Breast epithelium (tissue), 4 donors: ENCODE measurements at regions of chr5 and their contacts with region 1.

Region 1: GRCh38 chr5:124927735-124928134 is 181.3 kb upstream of the ZNF608 start:
- DNase-seq: no peak
- H3K4me3 ChIP-seq: no peak overlapping the region
- H3K27ac ChIP-seq: no peak overlapping the region
- H3K4me1 ChIP-seq: no peaks in the 10 kb centered on the region
- H3K27me3 ChIP-seq: no peaks in the 10 kb centered on the region
- CTCF ChIP-seq: no peak
- POLR2A ChIP-seq: no peak

Region 2: DNA sequence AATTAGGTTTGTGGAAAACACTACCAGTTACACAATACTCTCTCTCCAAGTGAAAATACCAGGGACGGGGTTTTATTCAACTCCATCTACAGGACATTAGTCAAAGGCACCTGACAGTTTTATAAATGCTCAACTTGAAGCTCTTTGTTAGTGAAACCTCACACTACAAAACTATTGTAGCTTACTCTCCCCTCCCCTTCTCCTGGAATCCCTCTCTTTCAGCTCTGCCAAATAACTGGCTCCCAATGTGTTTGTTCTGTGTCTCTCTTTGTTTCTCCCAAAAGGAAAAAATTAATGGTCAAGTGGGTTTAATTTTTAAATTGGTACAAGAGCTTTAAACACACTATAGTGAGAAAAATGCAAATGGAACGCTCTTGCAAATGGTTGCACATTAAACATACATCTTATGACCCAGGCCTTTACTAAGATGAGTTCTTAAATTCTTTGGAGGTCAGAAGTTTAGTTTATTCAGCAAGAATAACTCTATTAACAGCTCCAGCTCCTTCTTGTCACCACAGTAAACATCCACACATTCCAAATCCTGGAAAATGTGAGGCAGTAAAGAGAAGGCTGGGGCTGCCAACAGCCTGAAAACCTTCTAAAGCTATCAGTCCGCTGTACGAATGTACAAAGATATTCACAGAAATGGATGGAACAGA is 229.7 kb before region 1 on chr5:
- intact Hi-C with region 1: no loop called
- DNase-seq: no peak
- H3K4me3 ChIP-seq: no peak overlapping the region
- H3K27ac ChIP-seq: peak overlapping the region; percentile 48 to 63
- H3K4me1 ChIP-seq: peaks cover 0 to 19% of the 10 kb centered on the region in 2 donors
- H3K27me3 ChIP-seq: no peaks in the 10 kb centered on the region
- CTCF ChIP-seq: no peak
- POLR2A ChIP-seq: no peak

Region 3: DNA sequence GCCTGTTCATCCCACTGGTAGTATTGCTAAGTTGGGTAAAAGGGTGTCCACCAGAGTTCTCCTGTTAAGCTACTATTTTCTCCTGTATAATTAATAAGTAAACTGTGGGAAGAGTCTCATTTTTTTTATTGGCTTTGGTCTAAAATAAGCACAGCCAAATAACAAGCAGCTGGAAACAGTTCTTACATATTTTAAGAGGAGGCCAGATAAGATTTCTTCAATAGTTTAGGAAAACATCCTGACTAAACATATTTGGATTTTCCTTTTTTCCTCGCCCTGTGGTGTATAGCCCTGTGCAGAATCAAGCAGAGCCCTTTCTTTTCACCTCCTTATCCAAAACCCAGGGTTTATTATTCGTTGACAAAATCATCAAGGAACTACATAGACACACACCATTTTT is 59.1 kb before region 1 on chr5:
- intact Hi-C with region 1: loop called (anchors 2 kb)
- DNase-seq: no peak
- H3K4me3 ChIP-seq: no peak overlapping the region
- H3K27ac ChIP-seq: no peak overlapping the region
- H3K4me1 ChIP-seq: no peaks in the 10 kb centered on the region
- H3K27me3 ChIP-seq: no peaks in the 10 kb centered on the region
- CTCF ChIP-seq: no peak
- POLR2A ChIP-seq: no peak